Right ventricle myocardium inferior (tissue), 1 donor: ENCODE measurements at regions of chr6 and their contacts with region 1.

Region 1: DNA sequence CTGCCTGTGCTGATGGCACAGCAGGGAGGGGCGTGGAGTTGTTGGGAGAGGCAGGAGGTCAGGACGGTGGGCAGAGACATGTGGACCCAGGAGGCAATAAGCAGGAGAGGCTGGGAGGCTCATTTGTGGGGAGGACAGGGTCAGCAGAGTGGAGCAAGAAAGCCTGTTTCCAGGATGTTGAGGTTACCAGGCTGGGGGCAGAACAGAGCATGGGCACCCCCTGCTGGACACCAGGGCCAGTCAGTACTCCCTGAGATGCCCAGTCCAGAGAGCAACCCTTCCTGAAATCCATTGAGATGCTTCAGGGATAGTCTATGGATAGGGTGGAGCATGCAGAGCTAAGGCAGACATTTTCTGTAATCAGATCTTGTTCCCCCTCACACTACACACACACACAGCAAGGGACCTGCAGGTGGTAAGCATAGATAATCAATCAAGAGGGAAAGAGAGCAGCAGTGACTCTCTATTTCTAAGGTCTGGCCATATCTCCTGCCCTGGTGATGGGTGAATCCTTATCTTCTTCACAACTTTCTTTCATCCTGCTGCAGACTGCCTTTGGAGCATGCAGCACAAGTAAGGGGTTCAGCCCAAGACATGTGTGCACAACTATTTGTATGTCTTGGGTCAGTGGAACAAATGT is 41.7 kb downstream of the MOCS1 start:
- DNase-seq: no peak
- ATAC-seq: peak; percentile 82

Region 2: DNA sequence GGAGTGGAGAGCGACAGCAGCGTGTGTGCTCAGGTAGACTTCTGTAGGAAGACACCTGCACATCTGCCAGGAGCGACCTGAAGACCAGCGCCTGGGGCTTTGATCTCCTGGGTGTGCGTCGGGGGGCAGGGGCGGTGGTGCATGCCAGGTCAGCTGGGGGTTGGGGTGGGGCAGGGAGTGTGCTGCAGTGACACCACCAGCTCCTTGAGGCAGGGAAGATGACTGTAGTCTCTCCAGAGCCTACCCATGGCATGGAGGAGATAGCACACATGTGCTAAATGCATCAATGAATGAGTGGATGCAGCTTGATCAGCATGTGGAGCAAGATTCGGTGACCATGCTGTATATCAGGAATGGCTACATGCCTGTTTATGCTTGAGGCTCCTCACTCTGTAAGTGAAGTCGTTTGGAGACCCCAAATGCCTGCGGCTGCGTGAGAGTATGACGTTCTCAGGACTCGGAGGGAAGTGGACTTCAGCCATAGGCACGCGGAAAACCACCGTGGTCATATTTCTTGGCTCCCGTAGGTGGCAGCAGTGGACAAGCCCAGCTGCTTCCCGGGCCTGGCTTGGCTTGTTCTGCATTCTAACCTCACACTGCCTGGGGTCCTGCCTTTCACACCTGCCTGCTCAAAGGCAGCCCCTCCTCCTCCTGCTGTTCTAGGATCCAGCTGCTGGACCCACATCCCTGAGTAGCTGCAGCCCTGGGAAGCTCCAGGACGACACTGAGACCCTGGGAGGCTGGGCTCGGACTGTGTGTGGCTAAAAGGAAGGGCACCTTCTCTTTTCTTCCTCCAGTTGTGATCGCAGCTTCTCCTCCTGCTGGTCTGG is 530.7 kb before region 1 on chr6:
- intact Hi-C with region 1: loop called (anchors 5 kb)
- DNase-seq: no peak
- ATAC-seq: peak; percentile 66

Region 3: GRCh38 chr6:39377539-39377950 is 515.1 kb before region 1 on chr6:
- intact Hi-C with region 1: loop called (anchors 1 kb)
- DNase-seq: no peak
- ATAC-seq: peak; percentile 91